PC-3 (cell line): ENCODE measurements at regions of chr13 and their contacts with region 1.

Region 1: DNA sequence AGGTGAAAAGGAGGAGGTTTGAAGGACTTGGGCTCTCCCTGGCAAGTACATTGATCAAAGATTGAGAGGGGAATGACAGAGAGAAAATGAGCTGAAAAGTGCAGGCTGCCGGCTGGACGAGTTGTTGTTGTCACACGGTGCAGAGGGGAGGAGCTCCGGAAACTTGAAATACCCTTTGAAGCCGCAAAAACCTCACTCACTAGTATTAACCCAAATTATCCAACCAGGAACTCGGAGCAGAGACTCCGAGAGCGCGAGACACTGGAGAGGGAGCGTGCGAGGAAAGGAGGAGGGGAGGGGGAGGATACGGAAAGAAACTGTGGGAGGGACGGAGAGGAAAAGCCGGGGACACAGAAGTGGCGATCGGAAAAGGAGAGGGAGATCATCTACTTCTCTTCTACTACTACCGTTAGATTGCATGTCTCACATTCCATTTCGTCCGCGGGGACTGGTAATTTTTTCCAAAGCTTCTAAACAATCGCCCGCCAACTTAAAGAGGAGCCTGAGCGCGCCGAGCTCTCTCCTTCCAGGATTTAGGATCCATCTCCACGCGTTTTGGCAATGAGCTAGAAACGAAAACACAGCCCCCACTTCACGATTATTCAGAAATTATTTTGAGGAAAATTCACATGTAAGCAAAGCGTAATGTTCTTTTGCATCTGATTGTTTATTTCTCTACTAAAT is at the start of gene DACH1:
- DNase-seq: peak; percentile 24
- ATAC-seq: peak; percentile 82
- H3K4me3 ChIP-seq: peak within 1 kb of the TSS; percentile 67
- H3K27ac ChIP-seq: no peak within 1 kb of the TSS
- H3K4me1 ChIP-seq: no peaks in the 10 kb centered on the region
- H3K27me3 ChIP-seq: peaks cover 70% of the 10 kb centered on the region
- CTCF ChIP-seq: no peak
- total RNA-seq, gene DACH1: not detected in 2 replicates

Region 2: GRCh38 chr13:71464686-71465085 is 402.6 kb before region 1 on chr13:
- CTCF ChIA-PET with region 1: interaction called, 12 read pairs
- POLR2A ChIA-PET with region 1: no interaction called
- intact Hi-C with region 1: no loop called
- DNase-seq: no peak
- ATAC-seq: no peak
- H3K4me3 ChIP-seq: no peak overlapping the region
- H3K27ac ChIP-seq: no peak overlapping the region
- H3K4me1 ChIP-seq: no peaks in the 10 kb centered on the region
- H3K27me3 ChIP-seq: no peaks in the 10 kb centered on the region
- CTCF ChIP-seq: no peak

Region 3: GRCh38 chr13:71661921-71662320 is 205.4 kb before region 1 on chr13:
- CTCF ChIA-PET with region 1: no interaction called
- POLR2A ChIA-PET with region 1: interaction called, 3 read pairs
- intact Hi-C with region 1: loop called (anchors 10 kb)
- DNase-seq: peak; percentile 52
- ATAC-seq: peak; percentile 89
- H3K4me3 ChIP-seq: no peak overlapping the region
- H3K27ac ChIP-seq: no peak overlapping the region
- H3K4me1 ChIP-seq: peaks cover 7% of the 10 kb centered on the region
- H3K27me3 ChIP-seq: no peaks in the 10 kb centered on the region
- CTCF ChIP-seq: no peak

Region 4: DNA sequence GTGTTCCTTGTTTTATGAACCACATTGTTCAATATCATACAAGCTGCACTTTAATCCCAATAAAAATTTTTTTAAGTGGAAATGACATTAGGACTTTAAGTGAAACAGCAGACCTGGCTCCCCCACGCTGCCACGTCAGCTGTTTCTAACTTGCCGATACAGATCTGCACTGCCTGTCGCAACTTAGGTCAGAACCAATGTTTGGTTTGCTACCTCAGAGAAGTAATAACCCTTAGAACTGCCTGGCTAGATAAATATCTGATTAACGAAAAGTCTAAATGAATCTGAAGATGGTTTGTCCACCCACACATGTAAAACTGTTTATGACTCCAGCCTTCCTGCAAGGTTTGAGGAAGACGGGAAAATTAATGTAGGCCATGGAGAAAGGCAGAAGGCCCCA is 327.3 kb after region 1 on chr13:
- CTCF ChIA-PET with region 1: no interaction called
- POLR2A ChIA-PET with region 1: no interaction called
- intact Hi-C with region 1: loop called (anchors 10 kb)
- DNase-seq: peak; percentile 61
- ATAC-seq: peak; percentile 85
- H3K4me3 ChIP-seq: peak overlapping the region; percentile 47; the same call in 1 of the 2 replicates
- H3K27ac ChIP-seq: peak overlapping the region; percentile 81
- H3K4me1 ChIP-seq: peaks cover 18% of the 10 kb centered on the region
- H3K27me3 ChIP-seq: no peaks in the 10 kb centered on the region
- CTCF ChIP-seq: no peak